HAP-1 (cell line): ENCODE measurements at regions of chr13 and their contacts with region 1.

Region 1: DNA sequence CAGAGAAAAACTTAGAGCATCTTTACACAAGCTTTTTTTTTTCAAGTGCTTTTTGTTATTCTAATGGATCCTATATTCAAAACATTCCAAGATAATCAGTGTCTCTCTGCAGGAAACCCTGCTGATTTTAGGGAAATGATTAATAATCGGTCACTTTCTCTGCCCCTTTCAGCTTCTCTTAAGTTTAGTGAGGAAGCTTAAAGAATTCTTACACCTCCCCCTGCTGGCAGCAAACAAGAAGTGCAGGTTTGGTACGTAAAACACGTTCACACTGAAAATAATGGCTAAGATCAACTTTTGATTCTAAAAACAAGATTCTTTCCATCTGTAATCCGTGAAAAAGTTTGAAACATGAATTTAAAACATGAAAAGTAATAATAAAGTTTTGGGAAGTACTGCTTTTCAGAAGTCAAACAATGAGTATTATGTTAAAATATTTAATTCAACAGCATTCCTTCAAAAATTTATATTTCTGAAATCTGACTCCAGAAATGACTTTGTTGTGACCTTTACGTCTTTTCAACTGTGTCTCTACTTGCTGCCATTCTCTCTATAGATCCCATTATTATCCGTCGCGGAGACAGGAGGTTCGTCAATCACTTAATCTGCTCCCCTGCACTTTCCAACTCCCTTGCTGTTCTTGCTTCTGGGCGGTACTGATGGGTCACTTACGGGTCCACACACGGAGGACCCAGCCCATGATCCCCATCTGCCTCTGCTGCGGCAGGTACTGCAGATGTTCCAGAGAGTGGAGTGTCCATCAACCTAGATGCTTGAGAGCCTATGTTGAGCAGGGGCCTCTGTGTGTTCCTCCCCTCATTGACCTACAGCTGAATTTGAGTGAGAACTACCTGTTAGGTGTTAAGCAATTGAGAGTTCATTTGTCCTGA is 203.1 kb upstream of the EDNRB start:
- DNase-seq: peak; percentile 36 to 56
- H3K4me3 ChIP-seq: no peak overlapping the region
- H3K4me1 ChIP-seq: no peaks in the 10 kb centered on the region
- H3K27me3 ChIP-seq: no peaks in the 10 kb centered on the region

Region 2: DNA sequence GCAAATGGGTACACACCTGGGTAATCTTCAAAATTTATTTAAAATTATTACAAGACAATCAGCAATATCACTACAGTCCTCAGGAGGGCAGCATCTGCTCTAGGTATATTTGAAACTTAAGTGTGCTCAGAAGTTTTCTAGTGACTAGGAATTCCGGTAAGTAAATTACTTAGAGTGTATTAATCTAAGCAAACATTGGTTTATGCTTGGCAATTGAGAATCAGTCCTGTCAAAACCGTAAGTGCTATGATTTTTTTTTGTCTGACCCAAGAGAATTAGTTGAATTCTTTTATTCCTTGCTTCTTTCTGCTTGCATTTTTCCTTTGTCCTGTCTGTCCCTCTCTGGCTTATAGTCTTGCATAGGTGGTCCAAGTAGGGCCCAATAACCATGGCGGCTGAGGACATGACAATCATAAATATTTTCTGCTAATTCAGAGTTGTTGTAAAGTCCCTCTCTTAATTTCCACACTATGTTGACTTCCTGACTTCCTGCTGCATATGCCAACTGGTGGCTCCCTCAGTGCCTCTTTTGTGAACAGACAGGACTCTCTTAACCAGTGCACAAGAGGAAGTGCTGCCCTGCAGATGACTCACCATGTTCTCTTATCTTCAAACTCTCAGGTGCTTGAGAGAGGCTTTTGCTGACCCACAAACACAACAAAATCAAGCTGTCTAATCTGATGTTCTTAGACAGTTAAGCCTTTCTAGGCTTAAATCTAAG is 342.0 kb before region 1 on chr13:
- in situ Hi-C with region 1: loop called (anchors 10 kb)
- DNase-seq: peak; percentile 35 to 48
- H3K4me3 ChIP-seq: no peak overlapping the region
- H3K4me1 ChIP-seq: no peaks in the 10 kb centered on the region
- H3K27me3 ChIP-seq: no peaks in the 10 kb centered on the region